Right cardiac atrium (tissue), 5 donors: ENCODE measurements at regions of chr7 and their contacts with region 1.

Region 1: GRCh38 chr7:128425850-128426249 is 16.1 kb upstream of the IMPDH1 start:
- DNase-seq: peak; percentile 61 to 86 (median 73)
- ATAC-seq: peak; percentile 18 to 63
- H3K4me3 ChIP-seq: no peak overlapping the region
- H3K27ac ChIP-seq: no peak overlapping the region
- H3K4me1 ChIP-seq: no peaks in the 10 kb centered on the region
- H3K27me3 ChIP-seq: no peaks in the 10 kb centered on the region

Region 2: GRCh38 chr7:128398016-128398840 is 27.6 kb before region 1 on chr7:
- intact Hi-C with region 1: loop called in 1 of 4 experiments (anchors 2 kb)
- DNase-seq: peak in 2 of 3 donors; percentile 79 to 82
- ATAC-seq: peak; percentile 34 to 49
- H3K4me3 ChIP-seq: no peak overlapping the region
- H3K27ac ChIP-seq: no peak overlapping the region
- H3K4me1 ChIP-seq: no peaks in the 10 kb centered on the region
- H3K27me3 ChIP-seq: no peaks in the 10 kb centered on the region

Region 3: DNA sequence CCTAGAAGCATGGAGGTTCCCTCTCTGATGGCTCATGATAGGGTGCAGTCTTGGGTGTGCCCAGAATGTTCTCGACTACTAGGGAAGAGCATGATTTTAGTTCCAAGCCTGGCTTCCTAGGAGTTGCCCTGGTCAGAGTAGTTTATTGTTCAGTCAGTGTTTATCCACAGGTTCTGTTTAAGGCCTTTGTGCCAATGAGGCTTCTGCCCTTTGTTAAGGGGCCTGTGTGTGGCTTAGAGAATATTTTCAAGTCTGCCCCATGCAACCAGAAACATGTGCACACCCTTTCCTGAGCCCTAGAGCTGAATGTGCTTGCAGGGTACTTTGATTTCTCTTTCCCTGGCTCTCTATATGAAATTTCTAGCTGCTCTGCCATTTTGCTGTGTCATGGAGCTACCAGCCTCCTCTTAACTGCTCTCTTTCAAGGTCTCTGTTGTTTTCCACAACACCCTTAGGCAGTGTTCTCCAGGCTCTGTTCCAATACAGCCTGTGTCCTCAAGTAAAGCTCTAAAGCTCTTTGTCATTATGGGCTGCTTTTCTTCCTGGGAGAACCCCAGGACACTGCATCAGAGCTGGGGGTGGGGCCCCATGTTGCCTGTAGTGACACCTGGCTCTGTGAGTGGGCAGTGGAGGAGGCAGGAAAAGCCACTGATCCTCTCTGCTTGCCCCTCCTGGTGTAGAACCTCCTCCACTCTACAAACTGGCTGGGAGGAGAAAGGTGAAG is 684.6 kb after region 1 on chr7:
- intact Hi-C with region 1: no loop called
- DNase-seq: no peak
- ATAC-seq: no peak
- H3K4me3 ChIP-seq: no peak overlapping the region
- H3K27ac ChIP-seq: no peak overlapping the region
- H3K4me1 ChIP-seq: no peaks in the 10 kb centered on the region
- H3K27me3 ChIP-seq: no peaks in the 10 kb centered on the region